ENCODE measurements at regions of chr1 and their contacts with region 1.

Region 1: DNA sequence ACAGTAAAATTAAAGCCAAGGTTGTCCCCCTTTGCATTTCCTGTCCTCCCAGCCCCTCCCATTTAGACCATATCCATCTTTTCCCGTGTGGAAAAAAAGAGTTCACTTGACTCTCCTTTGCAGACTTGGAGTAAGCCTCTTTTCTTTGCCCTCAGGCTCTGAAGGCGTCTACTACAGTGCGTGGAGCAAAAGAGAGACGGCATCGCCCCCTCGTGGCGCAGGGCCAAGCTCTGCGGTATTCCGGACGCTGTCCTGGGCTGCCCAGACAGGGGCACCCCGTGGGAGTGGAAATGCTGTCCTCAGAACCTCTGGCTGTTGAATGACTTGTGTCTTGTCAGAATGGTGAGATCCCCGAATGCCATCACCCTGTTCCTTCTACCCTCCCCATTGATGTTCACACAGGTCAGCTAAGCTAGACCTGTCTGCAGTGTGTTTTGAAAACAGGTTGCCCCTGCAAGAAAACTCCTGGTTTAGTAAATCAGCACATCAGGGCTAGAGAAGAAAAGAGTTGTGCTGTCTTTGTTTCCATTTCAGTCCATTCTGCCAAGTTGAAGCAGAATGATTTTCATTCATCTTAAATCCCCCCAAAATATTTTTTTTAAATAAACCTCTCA is 12.3 kb upstream of the GJA8 start:
- DNase-seq: peak; percentile 58
- H3K4me3 ChIP-seq: no peak overlapping the region
- H3K27ac ChIP-seq: no peak overlapping the region
- H3K4me1 ChIP-seq: no peaks in the 10 kb centered on the region
- H3K27me3 ChIP-seq: no peaks in the 10 kb centered on the region
- CTCF ChIP-seq: peak; percentile 77 to 88

Region 2: DNA sequence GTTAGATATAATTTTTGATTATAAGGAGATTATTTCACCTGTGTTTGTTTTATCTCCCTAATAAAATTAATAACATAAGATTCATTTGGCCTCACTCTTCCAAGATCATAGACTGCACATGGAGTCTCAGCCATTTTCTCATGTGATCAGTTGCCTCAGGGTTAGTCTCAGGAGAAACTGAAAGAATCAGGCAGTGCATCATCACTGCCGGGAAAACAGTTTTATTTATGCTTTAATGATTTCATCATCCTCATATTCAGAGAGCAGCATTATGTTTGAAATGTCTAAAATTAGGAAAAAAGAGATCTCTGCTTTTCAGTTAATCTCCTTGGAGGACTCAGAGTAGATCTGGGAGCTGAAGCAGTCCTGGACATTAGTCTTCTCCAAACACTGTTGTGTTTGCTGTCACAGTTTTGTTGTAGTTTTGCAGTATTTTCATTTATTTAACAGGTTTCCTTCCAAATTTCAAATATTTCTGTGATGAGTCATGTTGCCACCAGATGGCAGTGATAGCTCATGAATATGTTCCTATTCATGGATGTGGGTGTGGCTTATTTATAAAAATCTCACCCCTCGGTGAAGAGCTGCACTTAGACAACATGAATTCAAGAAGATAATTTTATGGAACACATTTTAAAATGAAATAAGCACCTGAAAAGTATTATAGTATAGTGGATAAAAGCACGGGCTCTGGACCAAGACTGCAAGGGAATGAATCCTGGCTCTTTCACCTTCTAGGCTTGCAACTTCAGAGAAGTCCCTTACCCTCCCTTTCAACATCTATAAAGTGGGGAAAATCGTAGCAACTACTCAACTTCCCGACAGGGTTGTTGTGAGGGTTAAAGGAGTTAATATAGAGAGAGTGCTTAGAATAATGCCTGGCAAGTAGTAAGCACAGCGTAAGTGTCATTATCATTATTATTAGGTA is 616.6 kb before region 1 on chr1:
- CTCF ChIA-PET with region 1: no interaction called
- dilution Hi-C with region 1: no loop called
- in situ Hi-C with region 1: no loop called
- intact Hi-C with region 1: loop called (anchors 1 kb)
- DNase-seq: peak; percentile 79
- H3K4me3 ChIP-seq: no peak overlapping the region
- H3K27ac ChIP-seq: peak overlapping the region; percentile 83
- H3K4me1 ChIP-seq: peaks cover 10% of the 10 kb centered on the region
- H3K27me3 ChIP-seq: no peaks in the 10 kb centered on the region
- CTCF ChIP-seq: peak; percentile 30 to 45

Region 3: GRCh38 chr1:147515046-147515869 is 375.0 kb before region 1 on chr1:
- CTCF ChIA-PET with region 1: no interaction called
- dilution Hi-C with region 1: loop called (anchors 25 kb)
- in situ Hi-C with region 1: loop called in 1 of 2 experiments (anchors 10 kb)
- intact Hi-C with region 1: loop called (anchors 2 kb)
- DNase-seq: peak; percentile 64
- H3K4me3 ChIP-seq: no peak overlapping the region
- H3K27ac ChIP-seq: no peak overlapping the region
- H3K4me1 ChIP-seq: no peaks in the 10 kb centered on the region
- H3K27me3 ChIP-seq: peaks cover 3% of the 10 kb centered on the region
- CTCF ChIP-seq: peak in 1 of 2 donors; percentile 47

Region 4: DNA sequence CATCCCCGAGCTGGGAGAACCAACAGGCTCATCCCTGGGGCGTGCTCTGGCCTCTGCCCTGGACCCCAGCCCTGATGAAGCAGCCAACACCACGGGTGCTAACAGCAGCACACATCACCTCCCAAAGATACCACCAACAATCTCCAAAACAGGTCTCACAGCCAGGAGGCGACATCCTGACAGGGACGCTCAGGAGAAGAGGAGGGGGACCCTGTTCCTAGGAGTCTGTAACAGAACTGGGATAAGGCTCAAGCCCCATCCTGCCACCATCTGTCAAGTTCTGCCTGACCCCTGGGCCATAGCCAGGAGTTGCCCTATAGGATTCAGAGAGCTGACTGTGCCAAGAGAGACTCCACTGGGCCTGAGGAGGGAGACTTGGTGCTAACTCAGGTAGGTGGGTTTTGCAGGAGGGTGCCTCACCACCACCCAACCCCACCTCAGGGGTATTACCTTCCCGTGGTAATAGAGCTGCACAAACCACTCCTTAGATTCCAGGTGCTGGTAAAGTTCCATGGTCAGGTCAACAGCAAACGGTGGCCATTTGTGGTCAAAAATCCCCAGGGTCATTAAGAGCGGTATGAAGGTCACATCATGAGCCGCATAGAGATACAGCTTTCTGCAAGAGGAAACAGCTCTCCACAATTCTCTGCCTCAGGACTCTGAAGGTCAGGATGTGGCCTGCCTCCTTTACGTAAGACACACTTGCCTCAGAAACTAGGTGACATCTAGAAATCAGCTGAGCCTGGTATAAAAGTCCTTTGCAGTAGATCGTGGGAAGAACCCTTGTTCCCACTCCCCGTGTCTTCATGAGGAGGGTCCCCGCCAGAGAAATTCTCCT is 242.3 kb before region 1 on chr1:
- CTCF ChIA-PET with region 1: no interaction called
- dilution Hi-C with region 1: loop called (anchors 5 kb)
- in situ Hi-C with region 1: loop called in 1 of 2 experiments (anchors 5 kb)
- intact Hi-C with region 1: no loop called
- DNase-seq: no peak
- H3K4me3 ChIP-seq: no peak overlapping the region
- H3K27ac ChIP-seq: no peak overlapping the region
- H3K4me1 ChIP-seq: no peaks in the 10 kb centered on the region
- H3K27me3 ChIP-seq: no peaks in the 10 kb centered on the region
- CTCF ChIP-seq: no peak

Region 5: GRCh38 chr1:147700042-147701006 is 190.0 kb before region 1 on chr1:
- CTCF ChIA-PET with region 1: interaction called, 4 read pairs
- dilution Hi-C with region 1: no loop called
- in situ Hi-C with region 1: loop called in 1 of 2 experiments (anchors 10 kb)
- intact Hi-C with region 1: loop called (anchors 1 kb)
- DNase-seq: peak; percentile 47
- H3K4me3 ChIP-seq: no peak overlapping the region
- H3K27ac ChIP-seq: no peak overlapping the region
- H3K4me1 ChIP-seq: no peaks in the 10 kb centered on the region
- H3K27me3 ChIP-seq: no peaks in the 10 kb centered on the region
- CTCF ChIP-seq: peak; percentile 97